Activated T-helper 1 cell treated with anti-CD3 and anti-CD28 coated beads, Interleukin-12 subunit alpha, Interleukin-12 subunit beta, Interleukin-2, Interleukin-4 antibody, amounts not matched to agents 30 ng/mL and 10 ng/mL and 1 ng/mL, durations not matched to agents 14 hours and 24 hours and 36 hours (primary cell): ENCODE measurements at regions of chr1 and their contacts with region 1.

Region 1: GRCh38 chr1:43706598-43707495 is 489 bp upstream of the ST3GAL3 start:
- DNase-seq: peak; percentile 91
- H3K4me3 Mint-ChIP-seq: peak overlapping the region; percentile 88
- H3K27ac Mint-ChIP-seq: peak overlapping the region; percentile 76
- H3K4me1 Mint-ChIP-seq: peaks cover 46% of the 10 kb centered on the region
- H3K27me3 Mint-ChIP-seq: no peaks in the 10 kb centered on the region

Region 2: DNA sequence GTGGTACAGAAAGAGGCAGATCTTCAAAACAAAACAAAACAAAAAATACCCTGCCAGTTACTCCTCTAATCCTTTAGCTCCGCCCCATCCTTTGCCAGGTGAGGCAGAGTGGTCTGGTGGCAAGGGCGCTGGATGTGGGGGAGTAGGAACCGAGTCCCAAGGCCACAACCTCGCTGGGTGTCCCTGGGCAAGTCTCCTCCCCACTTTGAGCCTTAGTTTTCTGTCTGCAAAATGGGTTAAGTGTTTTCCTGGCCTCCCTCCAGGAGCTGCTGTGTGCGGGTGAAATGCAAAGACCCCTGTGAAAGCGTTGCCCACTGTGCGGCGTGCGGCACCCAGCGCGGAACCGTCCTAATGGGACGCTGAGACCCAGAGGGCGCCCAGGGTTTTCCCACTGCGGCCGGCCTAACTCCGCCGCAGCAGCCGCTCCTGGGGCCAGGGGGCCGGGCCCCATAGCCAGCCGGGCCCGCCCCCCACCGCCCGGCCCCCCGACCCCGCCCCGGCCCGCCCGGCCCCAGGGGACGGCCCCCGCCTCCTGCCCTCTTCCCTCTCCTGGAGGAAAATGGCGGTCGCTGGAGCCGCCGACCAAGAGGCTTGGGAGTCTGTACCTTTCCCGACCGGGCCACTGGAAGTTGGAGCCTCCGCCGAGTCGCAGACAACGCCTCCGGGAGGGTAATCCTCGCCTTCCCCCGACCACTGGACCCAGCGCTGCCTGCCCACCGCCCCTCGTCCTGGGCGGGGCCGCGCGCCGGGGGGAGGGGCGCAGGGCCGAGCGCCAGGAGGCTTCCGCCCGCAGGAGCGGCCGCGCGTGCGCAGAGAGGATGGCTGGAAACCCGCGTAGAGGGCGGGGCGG is 890.0 kb before region 1 on chr1 and contains the starts of genes ERMAP and SVBP:
- intact Hi-C with region 1: loop called (anchors 2 kb)
- DNase-seq: peak; percentile 90
- H3K4me3 Mint-ChIP-seq: peak within 1 kb of the TSS; percentile 79
- H3K27ac Mint-ChIP-seq: peak within 1 kb of the TSS; percentile 80
- H3K4me1 Mint-ChIP-seq: peaks cover 19% of the 10 kb centered on the region
- H3K27me3 Mint-ChIP-seq: no peaks in the 10 kb centered on the region
- total RNA-seq, gene ERMAP: 3.4 and 3.7 TPM in 2 replicates
- total RNA-seq, gene SVBP: 6.4 and 8.2 TPM in 2 replicates

Region 3: GRCh38 chr1:43454266-43455011 is 252.4 kb before region 1 on chr1:
- intact Hi-C with region 1: loop called (anchors 5 kb)
- DNase-seq: peak; percentile 61
- H3K4me3 Mint-ChIP-seq: peak overlapping the region; percentile 84
- H3K27ac Mint-ChIP-seq: peak overlapping the region; percentile 79
- H3K4me1 Mint-ChIP-seq: peaks cover 18% of the 10 kb centered on the region
- H3K27me3 Mint-ChIP-seq: peaks cover 28% of the 10 kb centered on the region

Region 4: DNA sequence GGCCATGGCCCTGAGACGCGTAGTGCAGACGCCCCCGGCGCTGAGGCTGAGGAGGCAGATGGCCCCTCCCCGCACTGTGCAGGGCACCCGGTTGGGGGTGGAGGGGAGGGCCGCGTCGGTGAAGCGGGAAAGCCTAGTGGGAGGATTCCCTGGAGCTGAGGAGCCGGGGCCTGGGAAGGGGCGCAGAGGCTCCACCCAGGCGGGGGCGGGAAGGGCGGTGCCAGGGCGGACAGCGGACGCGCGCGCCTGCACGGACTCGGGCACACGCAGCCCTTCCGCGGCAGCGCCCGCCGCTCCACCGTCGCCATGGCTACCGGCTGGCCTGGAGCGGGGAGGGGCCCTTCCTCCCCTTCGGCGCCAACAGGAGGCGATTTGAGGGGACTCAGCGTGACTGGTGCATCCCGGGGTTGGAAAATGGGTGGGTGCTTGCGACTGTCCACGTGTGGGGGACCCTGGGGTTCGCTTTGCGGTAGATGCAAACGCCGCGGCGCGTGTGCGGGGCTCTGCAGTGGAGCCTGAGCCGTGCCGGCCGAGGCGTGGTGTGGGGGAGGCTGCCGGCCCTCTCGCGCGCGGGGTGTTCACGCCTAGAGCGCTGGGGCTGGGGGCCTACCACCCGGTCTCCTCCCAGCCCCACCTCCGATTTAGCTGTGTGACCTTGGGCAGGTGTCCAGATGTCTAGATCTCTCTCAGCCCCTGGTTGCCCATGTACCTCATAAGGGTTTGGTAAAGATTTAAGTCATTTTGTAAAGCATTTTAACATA is 141.1 kb before region 1 on chr1:
- intact Hi-C with region 1: loop called (anchors 1 kb)
- DNase-seq: peak; percentile 55
- H3K4me3 Mint-ChIP-seq: peak overlapping the region; percentile 74
- H3K27ac Mint-ChIP-seq: no peak overlapping the region
- H3K4me1 Mint-ChIP-seq: peaks cover 12% of the 10 kb centered on the region
- H3K27me3 Mint-ChIP-seq: peaks cover 1% of the 10 kb centered on the region

Region 5: GRCh38 chr1:43750083-43750482 is 43.2 kb after region 1 on chr1:
- intact Hi-C with region 1: no loop called
- DNase-seq: no peak
- H3K4me3 Mint-ChIP-seq: no peak overlapping the region
- H3K27ac Mint-ChIP-seq: no peak overlapping the region
- H3K4me1 Mint-ChIP-seq: no peaks in the 10 kb centered on the region
- H3K27me3 Mint-ChIP-seq: no peaks in the 10 kb centered on the region

Region 6: DNA sequence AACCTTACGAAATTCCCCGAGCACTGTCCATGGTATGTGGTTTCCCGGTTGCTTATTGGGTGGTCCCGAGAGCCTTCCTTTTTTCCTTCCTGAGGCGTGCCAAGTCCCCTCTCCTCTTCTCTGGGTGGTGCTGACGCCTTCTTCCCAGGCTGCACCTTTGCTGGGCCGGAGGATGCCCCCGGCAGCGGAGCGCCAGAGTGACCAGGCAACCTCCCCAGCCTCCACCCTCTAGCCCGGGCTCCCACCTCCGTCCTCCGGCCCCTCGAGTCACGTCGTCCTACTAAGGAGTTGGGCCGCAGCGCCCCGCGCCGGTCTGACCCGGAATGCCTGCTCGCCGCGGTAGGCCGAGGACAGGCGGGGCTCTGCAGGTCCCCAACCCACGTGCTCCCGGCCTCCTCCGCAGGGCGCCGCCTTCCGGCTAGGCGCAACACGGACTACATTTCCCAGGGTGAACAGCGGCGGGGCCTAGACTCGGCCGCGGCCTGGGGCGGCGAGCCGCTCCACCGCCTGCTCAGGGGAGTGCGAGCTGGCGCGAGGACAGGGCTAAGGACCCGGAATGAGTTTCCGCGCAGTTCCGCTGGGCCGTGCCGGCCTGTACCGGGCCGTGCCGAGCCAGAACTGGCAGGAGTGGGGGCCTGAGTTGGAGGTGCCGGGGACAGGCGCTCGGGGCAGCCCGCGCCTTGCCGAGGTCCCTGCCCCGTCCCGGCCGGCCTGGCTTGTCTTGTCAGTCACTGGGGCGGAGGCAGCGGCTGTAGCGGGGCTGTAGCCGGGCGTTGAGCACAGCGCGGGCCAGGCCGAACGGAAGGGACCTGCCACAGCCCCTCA is 239.6 kb after region 1 on chr1 and contains the start of gene IPO13:
- intact Hi-C with region 1: loop called (anchors 1 kb)
- DNase-seq: peak; percentile 96
- H3K4me3 Mint-ChIP-seq: peak within 1 kb of the TSS; percentile 97
- H3K27ac Mint-ChIP-seq: peak within 1 kb of the TSS; percentile 96
- H3K4me1 Mint-ChIP-seq: peaks cover 53% of the 10 kb centered on the region
- H3K27me3 Mint-ChIP-seq: no peaks in the 10 kb centered on the region
- total RNA-seq, gene IPO13: 28.6 and 33.9 TPM in 2 replicates

Region 7: GRCh38 chr1:43991476-43992231 is 284.8 kb after region 1 on chr1 and contains the start of gene CCDC24:
- intact Hi-C with region 1: loop called (anchors 1 kb)
- DNase-seq: peak; percentile 74
- H3K4me3 Mint-ChIP-seq: peak within 1 kb of the TSS; percentile 91
- H3K27ac Mint-ChIP-seq: peak within 1 kb of the TSS; percentile 82
- H3K4me1 Mint-ChIP-seq: peaks cover 13% of the 10 kb centered on the region
- H3K27me3 Mint-ChIP-seq: no peaks in the 10 kb centered on the region
- total RNA-seq, gene CCDC24: 2.7 TPM in 2 replicates

Region 8: GRCh38 chr1:44049839-44050238 is 343.0 kb after region 1 on chr1:
- intact Hi-C with region 1: loop called (anchors 5 kb)
- DNase-seq: no peak
- H3K4me3 Mint-ChIP-seq: no peak overlapping the region
- H3K27ac Mint-ChIP-seq: no peak overlapping the region
- H3K4me1 Mint-ChIP-seq: peaks cover 16% of the 10 kb centered on the region
- H3K27me3 Mint-ChIP-seq: peaks cover 3% of the 10 kb centered on the region